ENCODE measurements at regions of chr11 and their contacts with region 1.

Region 1: DNA sequence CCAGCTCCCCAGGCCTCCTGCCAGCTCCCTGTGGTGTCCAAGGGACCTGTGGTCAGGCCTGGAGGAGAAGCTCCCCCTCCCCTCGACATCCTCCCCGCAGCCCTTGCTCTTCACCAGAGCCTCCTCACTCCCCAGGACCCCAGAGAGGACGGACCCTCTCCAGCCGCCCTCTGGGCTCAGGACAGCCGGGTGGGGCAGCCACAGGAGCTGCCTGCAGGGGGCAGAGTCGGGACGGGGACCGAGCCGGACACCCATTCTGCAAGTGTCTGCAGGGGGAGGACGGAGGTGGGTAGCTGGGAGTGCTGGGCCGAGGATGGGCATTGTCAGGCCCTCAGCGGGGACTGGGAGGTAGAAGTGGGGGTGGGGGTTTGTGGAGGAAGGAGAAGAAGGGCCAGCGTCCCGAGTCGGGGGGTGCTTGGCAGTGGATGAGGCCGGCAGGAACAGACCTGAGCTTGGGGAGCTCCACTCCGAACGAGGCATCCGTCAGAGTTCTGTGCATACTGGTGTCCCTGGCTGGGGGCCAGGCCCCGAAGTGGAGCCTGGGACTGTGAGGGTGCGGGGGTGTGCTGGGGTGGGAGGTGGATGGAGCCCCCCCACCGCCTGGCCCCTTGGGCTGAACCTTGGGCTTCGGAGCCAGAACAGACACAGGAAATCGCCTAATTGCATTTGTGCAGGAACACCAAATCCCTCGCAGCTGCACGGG is 15.2 kb downstream of the PRR33 start:
- DNase-seq: peak; percentile 38
- ATAC-seq: no peak
- H3K4me3 Mint-ChIP-seq: no peak overlapping the region
- H3K27ac Mint-ChIP-seq: no peak overlapping the region
- H3K4me1 Mint-ChIP-seq: peaks cover 28% of the 10 kb centered on the region
- H3K27me3 Mint-ChIP-seq: no peaks in the 10 kb centered on the region
- CTCF ChIP-seq: no peak

Region 2: DNA sequence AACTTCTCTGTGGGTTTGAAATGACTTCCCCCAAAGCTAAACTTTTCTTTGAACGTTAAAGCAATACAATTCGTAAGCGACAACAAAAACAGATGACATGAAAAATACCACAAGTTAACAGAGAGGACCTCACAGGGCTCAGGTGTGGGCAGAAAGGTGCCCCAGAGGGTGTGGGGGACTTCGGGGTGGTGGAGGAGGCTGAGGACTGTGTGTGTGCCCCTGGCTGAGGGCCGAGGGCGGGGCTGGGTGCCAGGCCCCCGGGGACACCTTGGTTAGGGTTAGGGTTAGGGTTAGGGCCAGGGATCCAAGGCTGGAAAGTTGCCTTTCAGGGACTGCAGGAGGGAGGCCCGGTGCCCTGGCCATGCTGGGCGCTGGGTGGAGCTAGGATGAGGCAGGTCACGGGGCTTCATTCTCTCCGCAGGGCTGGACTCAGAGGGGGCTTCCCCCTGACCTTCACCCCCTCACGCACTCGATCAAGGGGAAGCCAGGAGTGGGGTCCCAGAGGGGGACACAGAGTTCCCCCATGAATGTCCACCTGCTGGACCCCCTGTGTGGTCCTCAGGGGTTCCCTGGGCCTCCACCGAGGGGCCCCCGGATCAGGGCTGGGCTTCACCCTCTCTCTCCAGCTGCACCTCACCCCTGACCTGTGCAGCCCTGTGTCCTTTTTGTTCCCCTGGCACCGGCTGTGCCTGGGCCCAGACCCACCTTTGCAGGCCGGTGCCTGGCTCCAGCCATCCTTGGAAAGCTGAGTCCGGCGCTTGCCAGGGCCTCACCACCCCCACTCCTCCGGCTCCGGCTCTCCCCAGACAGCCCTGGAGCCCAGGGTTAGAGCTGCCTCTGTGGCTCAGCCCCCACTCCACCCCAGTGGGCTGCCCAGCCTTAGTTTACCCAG is 30.7 kb before region 1 on chr11:
- CTCF ChIA-PET with region 1: interaction called, 10 read pairs
- POLR2A ChIA-PET with region 1: no interaction called
- intact Hi-C with region 1: no loop called
- DNase-seq: peak; percentile 48
- ATAC-seq: peak; percentile 47
- H3K4me3 Mint-ChIP-seq: peak overlapping the region; percentile 57
- H3K27ac Mint-ChIP-seq: peak overlapping the region; percentile 91
- H3K4me1 Mint-ChIP-seq: peaks cover 60% of the 10 kb centered on the region
- H3K27me3 Mint-ChIP-seq: no peaks in the 10 kb centered on the region
- CTCF ChIP-seq: no peak